Lower leg skin (tissue), 4 donors: ENCODE measurements at regions of chr13 and their contacts with region 1.

Region 1: DNA sequence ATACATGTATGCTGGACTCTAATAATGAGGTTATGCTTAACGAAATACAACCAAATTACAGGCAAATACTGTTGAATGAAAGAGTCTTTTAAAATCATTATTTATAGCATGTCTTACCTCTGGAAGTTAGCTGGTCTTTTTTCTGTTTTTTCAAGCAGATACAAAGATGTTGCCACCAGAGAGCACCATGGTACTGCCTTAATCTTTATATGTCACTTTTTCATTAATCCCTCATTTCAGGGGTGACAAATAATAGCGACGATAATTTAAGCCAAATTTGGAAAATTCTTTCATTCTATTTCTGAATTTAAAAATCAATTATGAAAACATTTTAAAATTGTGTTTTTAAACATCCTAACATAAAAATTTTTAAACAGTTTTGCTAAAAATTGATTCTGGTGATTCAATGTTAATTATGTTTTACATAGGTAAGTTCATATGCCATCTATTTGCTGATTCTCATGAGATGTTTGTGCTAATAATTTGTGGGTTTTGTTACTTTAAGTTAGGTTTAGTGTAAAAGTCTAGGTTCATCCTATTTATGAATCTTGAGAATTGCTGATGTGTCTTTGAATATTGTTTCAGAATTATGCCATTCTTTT is 379.3 kb upstream of the SGCG start:
- DNase-seq: no peak
- H3K4me3 ChIP-seq: no peak overlapping the region
- CTCF ChIP-seq: no peak
- POLR2A ChIP-seq: no peak

Region 2: DNA sequence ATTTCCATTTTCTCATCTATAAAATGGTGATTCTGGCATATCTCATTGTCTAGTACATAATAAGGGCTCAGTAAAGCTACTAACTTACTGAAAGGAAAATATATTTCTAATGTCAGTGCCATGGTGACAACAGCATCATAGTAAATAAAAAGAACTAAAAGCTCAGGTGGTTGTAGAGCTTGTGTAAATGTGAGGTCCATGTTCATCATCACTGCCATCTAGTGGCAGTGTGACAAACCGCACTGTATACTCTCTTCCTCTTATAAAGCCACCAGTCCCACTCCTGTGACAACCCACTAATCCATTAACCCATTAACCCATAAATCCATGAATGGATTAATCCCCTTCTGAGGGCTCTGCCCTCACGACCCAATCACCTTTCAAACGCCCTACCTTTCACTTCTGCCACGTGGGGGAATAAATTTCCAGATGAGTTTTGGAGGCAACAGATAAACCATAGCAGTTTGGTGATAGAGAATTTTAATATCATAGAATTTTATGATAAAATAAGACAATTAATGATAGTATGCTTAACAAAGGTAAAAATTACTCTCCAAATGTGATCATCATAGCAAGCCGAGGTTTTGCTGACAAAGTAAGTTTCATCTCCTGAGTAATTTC is 218.8 kb after region 1 on chr13:
- intact Hi-C with region 1: loop called (anchors 10 kb)
- DNase-seq: peak in 1 of 2 donors; percentile 30
- H3K4me3 ChIP-seq: no peak overlapping the region
- CTCF ChIP-seq: no peak
- POLR2A ChIP-seq: no peak